ENCODE measurements at regions of chr2 and their contacts with region 1.

Region 1: DNA sequence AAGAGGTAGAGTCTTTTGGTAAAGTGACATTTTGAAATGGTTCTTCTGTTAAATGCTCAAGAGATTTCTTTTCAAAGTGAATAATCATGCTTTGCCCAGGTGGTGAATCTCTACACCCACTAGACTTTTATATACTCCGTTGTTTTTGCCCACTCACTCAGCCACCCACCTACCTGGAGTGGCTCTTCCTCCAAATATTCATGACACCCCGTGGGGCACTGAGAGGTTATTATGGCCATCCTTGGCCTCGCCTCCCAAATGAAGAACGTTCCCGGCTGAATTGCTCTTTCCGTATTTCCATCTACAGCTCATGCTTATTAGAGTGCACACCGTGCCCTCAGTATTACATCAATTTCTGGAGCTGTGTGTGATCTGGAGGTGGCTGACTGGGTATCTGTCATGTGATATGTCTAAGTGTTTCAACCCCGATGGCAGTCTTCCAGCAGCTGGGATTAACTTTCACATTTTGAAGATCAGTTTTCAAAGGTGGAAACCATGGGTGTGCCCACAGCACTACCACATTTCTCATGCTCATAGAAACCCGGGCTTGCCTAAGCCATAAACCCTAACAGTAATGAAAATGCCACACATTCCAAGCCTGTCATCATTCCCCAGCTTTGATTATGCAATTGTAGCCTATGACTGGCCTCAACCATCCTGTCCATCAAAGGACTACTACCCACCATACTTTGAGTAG is 406.6 kb upstream of the MMADHC start:
- DNase-seq: peak; percentile 100
- H3K4me3 ChIP-seq: no peak overlapping the region
- H3K27ac ChIP-seq: peak overlapping the region; percentile 74
- H3K4me1 ChIP-seq: peaks cover 29% of the 10 kb centered on the region
- H3K27me3 ChIP-seq: no peaks in the 10 kb centered on the region
- CTCF ChIP-seq: no peak

Region 2: GRCh38 chr2:149527998-149528755 is 466.0 kb before region 1 on chr2:
- CTCF ChIA-PET with region 1: no interaction called
- dilution Hi-C with region 1: no loop called
- in situ Hi-C with region 1: no loop called
- intact Hi-C with region 1: no loop called
- DNase-seq: no peak
- H3K4me3 ChIP-seq: no peak overlapping the region
- H3K27ac ChIP-seq: no peak overlapping the region
- H3K4me1 ChIP-seq: no peaks in the 10 kb centered on the region
- H3K27me3 ChIP-seq: no peaks in the 10 kb centered on the region
- CTCF ChIP-seq: no peak

Region 3: DNA sequence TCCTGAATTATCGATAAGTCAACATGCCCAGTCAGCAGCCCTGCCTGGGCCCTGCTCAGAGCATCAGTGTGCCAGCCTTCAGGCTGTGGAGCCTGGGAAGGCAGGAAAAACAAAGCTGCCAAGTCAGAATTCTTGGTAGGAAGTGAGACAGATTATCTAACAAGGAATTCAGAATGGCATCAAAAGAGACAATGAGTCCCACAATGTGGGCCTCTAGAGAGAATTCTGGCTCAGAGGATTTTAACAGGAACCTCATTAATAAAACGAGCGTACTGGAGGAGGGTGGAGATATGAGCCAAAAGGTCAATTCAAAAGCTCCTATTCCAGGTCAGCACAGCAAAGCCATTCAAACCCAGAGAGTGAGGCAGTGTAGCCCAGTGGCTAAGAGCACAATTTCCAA is 79.1 kb before region 1 on chr2:
- CTCF ChIA-PET with region 1: no interaction called
- dilution Hi-C with region 1: loop called (anchors 5 kb)
- in situ Hi-C with region 1: no loop called
- intact Hi-C with region 1: loop called (anchors 5 kb)
- DNase-seq: no peak
- H3K4me3 ChIP-seq: no peak overlapping the region
- H3K27ac ChIP-seq: no peak overlapping the region
- H3K4me1 ChIP-seq: no peaks in the 10 kb centered on the region
- H3K27me3 ChIP-seq: no peaks in the 10 kb centered on the region
- CTCF ChIP-seq: no peak

Region 4: GRCh38 chr2:150063432-150063889 is 69.3 kb after region 1 on chr2:
- CTCF ChIA-PET with region 1: no interaction called
- dilution Hi-C with region 1: no loop called
- in situ Hi-C with region 1: no loop called
- intact Hi-C with region 1: loop called (anchors 1 kb)
- DNase-seq: peak; percentile 90
- H3K4me3 ChIP-seq: no peak overlapping the region
- H3K27ac ChIP-seq: peak overlapping the region; percentile 23
- H3K4me1 ChIP-seq: peaks cover 23% of the 10 kb centered on the region
- H3K27me3 ChIP-seq: no peaks in the 10 kb centered on the region
- CTCF ChIP-seq: no peak

Region 5: DNA sequence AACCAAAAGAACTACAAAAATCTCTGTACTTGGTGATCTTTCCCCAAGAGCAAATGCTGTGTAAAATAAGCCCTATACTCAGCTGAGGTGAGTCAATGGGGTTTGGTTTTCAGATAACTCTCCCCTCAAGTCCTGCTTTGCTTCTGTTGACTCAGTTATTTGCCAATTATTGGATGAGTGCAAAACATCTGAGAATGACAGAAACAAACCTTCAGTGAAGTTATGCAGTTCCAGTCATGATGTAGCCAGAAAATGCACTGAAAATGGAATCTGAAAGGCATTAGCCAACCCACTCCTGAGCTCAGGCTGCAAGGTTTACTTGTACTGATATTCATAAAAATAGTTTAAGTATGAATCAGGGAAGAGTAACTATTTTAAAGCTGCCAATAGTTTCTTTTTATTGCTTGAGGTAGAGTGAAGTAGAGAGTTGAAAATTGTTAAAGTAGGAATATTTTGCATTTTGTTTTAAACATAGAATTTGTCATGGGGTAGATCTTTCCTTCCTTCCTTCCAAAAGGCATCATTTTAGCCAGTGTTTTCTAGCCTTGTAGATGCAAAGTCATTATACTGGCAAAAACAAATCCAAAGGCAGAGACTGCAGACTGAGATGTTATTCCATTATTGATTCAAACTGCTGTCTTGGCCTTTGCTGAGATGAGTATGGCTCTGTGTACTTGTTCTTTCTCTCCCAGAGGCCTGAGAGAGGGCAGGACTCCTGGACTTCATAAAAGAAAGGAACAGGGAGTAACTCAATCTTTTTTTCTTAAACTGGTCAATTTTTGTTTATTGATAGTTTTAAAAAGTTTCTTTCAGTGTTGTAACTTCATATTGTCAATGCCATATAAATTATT is 278.0 kb after region 1 on chr2:
- CTCF ChIA-PET with region 1: no interaction called
- dilution Hi-C with region 1: no loop called
- in situ Hi-C with region 1: no loop called
- intact Hi-C with region 1: loop called (anchors 5 kb)
- DNase-seq: peak; percentile 91
- H3K4me3 ChIP-seq: no peak overlapping the region
- H3K27ac ChIP-seq: peak overlapping the region; percentile 71
- H3K4me1 ChIP-seq: peaks cover 31% of the 10 kb centered on the region
- H3K27me3 ChIP-seq: no peaks in the 10 kb centered on the region
- CTCF ChIP-seq: no peak